HepG2 (cell line): ENCODE measurements at regions of chr17 and their contacts with region 1.

Region 1: DNA sequence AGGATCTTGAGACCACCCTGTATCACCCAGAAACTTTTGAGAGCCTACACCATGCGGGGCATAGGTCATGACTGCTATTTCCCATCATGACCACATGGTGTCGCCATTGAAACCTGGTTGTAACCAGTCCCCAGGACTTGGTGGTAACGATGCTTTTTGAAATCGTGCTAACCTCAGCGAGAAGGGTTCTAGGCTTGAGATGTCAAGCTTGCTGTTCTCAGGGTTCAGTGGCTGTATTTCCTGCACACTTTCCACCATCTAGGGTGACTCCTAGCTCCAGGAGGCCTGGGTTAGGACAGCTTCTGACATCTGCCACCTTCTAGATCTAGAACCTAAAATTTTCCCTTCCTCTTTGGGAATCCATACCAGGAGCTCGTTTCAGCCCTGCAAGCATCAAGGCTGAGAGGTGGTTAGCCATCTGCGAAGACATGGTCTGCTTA is 13.0 kb upstream of the SPNS3 start:
- DNase-seq: peak; percentile 73
- ATAC-seq: peak; percentile 85
- H3K4me3 ChIP-seq: no peak overlapping the region
- H3K27ac ChIP-seq: no peak overlapping the region
- H3K4me1 ChIP-seq: no peaks in the 10 kb centered on the region
- H3K27me3 ChIP-seq: 0 out of 5 replicates have a peak, but pooled peaks cover 0 to 4% of the 10 kb centered on the region in 2 experiments
- CTCF ChIP-seq: peak; percentile 91
- EP300 ChIP-seq: no peak
- POLR2A ChIP-seq: no peak
- RAD21 ChIP-seq: peak; percentile 73

Region 2: GRCh38 chr17:4394208-4395110 is 26.3 kb before region 1 on chr17:
- CTCF ChIA-PET with region 1: no interaction called
- POLR2A ChIA-PET with region 1: no interaction called
- in situ Hi-C with region 1: no loop called
- intact Hi-C with region 1: no loop called
- DNase-seq: no peak
- ATAC-seq: peak; percentile 33
- H3K4me3 ChIP-seq: peak overlapping the region in 1 of 3 experiments; percentile 45; a peak in 1 of 6 replicates
- H3K27ac ChIP-seq: no peak overlapping the region
- H3K4me1 ChIP-seq: peaks cover 50% of the 10 kb centered on the region
- H3K27me3 ChIP-seq: 0 out of 5 replicates have a peak, but pooled peaks cover 0 to 5% of the 10 kb centered on the region in 2 experiments
- CTCF ChIP-seq: no peak
- EP300 ChIP-seq: no peak
- POLR2A ChIP-seq: no peak
- RAD21 ChIP-seq: no peak

Region 3: DNA sequence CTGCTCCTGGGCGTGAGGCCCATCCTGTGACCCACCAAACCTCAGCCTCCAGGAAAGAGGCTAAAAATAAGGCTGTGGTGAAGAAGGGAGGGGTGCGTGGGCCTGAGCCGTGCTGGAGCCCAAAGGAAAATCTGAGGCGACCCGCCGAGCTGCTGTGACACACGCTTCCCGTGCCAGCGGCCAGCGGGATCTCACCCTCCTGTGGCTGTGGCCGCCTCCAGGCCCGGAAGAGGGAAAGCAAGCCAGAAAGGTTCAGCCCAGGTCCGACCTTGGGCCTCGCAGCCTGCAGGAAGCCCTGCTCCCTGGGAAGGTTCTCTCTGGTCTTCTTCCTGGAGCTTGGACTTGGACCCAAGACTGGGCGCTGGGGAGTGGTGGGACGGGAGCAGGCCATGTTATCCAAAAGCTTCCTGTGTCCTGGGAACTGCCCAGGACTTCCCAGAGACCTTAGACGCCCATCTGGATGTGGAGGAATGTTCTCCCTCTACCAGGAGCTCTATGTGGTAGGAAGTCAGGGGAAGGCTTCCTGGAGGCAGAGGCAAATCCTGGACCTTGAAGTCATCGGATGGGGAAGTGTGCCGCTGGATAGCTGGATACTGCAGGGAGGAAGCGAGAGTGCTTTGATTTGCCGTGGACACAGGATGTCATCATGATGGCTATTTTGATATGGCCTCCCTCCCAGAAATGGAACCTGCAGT is 89.4 kb after region 1 on chr17:
- CTCF ChIA-PET with region 1: no interaction called
- POLR2A ChIA-PET with region 1: no interaction called
- in situ Hi-C with region 1: loop called (anchors 5 kb)
- intact Hi-C with region 1: no loop called
- DNase-seq: no peak
- ATAC-seq: no peak
- H3K4me3 ChIP-seq: no peak overlapping the region
- H3K27ac ChIP-seq: no peak overlapping the region
- H3K4me1 ChIP-seq: no peaks in the 10 kb centered on the region
- H3K27me3 ChIP-seq: peaks cover 12 to 70% of the 10 kb centered on the region in 2 experiments
- CTCF ChIP-seq: no peak
- EP300 ChIP-seq: no peak
- POLR2A ChIP-seq: no peak
- RAD21 ChIP-seq: no peak

Region 4: GRCh38 chr17:4534026-4534914 is 113.6 kb after region 1 on chr17:
- CTCF ChIA-PET with region 1: interaction called, 8 read pairs
- POLR2A ChIA-PET with region 1: no interaction called
- in situ Hi-C with region 1: no loop called
- intact Hi-C with region 1: loop called (anchors 5 kb)
- DNase-seq: peak; percentile 38
- ATAC-seq: peak; percentile 66
- H3K4me3 ChIP-seq: peak overlapping the region in 1 of 3 experiments; percentile 43; a peak in 1 of 6 replicates
- H3K27ac ChIP-seq: no peak overlapping the region
- H3K4me1 ChIP-seq: peaks cover 16% of the 10 kb centered on the region
- H3K27me3 ChIP-seq: peaks cover 6 to 35% of the 10 kb centered on the region in 2 experiments
- CTCF ChIP-seq: no peak
- EP300 ChIP-seq: no peak
- POLR2A ChIP-seq: no peak
- RAD21 ChIP-seq: no peak

Region 5: DNA sequence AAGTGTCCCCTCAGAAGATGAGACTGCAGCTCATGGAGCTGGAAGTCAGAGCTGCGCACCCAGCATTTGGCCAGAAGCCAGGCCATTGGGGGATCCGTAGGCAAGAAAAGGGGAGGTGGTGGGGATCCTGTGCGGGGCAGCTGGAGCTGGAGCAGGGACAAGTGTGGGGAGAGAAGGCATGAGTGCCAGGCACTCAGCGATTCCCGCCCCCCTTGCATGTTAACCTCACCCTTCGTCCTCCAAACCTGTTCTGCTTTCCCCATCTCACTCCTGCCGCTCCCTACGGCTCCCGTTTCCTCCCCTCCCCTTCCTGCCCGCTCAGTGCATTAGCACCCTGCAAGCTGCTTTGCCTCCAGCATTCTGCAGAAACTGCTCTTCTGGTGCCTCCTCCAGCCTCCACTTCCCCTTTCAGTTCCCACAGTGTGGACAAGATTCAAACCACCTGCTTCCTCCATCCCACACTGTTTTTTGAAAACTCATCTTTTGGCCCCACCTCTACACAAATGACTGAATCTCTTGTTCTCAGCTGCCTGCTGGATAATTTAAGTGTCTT is 215.2 kb after region 1 on chr17:
- CTCF ChIA-PET with region 1: no interaction called
- POLR2A ChIA-PET with region 1: no interaction called
- in situ Hi-C with region 1: no loop called
- intact Hi-C with region 1: no loop called
- DNase-seq: no peak
- ATAC-seq: no peak
- H3K4me3 ChIP-seq: no peak overlapping the region
- H3K27ac ChIP-seq: no peak overlapping the region
- H3K4me1 ChIP-seq: no peaks in the 10 kb centered on the region
- H3K27me3 ChIP-seq: peaks cover 10 to 35% of the 10 kb centered on the region in 2 experiments; a peak in 4 of 5 replicates
- CTCF ChIP-seq: no peak
- EP300 ChIP-seq: no peak
- POLR2A ChIP-seq: no peak
- RAD21 ChIP-seq: no peak